Esophagus muscularis mucosa (tissue), 4 donors: ENCODE measurements at regions of chr1 and their contacts with region 1.

Region 1: GRCh38 chr1:171313835-171314320 is at the start of gene FMO4:
- DNase-seq: peak; percentile 97
- H3K4me3 ChIP-seq: peak within 1 kb of the TSS; percentile 24 to 42 (median 38)
- H3K27ac ChIP-seq: peak within 1 kb of the TSS; percentile 69 to 79 (median 74)
- H3K4me1 ChIP-seq: peaks cover 5 to 17% (median 16%) of the 10 kb centered on the region in 4 donors
- H3K27me3 ChIP-seq: no peaks in the 10 kb centered on the region
- CTCF ChIP-seq: peak; percentile 78 to 87 (median 83)
- EP300 ChIP-seq: no peak
- POLR2A ChIP-seq: no peak
- total RNA-seq, gene FMO4: 1.2 to 3.2 (median 1.7) TPM

Region 2: GRCh38 chr1:170967042-170967910 is 346.6 kb before region 1 on chr1:
- intact Hi-C with region 1: loop called (anchors 5 kb)
- DNase-seq: no peak
- H3K4me3 ChIP-seq: no peak overlapping the region
- H3K27ac ChIP-seq: no peak overlapping the region
- H3K4me1 ChIP-seq: no peaks in the 10 kb centered on the region
- H3K27me3 ChIP-seq: no peaks in the 10 kb centered on the region
- CTCF ChIP-seq: peak; percentile 67 to 76 (median 69)
- EP300 ChIP-seq: no peak
- POLR2A ChIP-seq: no peak

Region 3: GRCh38 chr1:171081314-171081753 is 232.5 kb before region 1 on chr1:
- intact Hi-C with region 1: loop called (anchors 10 kb)
- DNase-seq: no peak
- H3K4me3 ChIP-seq: no peak overlapping the region
- H3K27ac ChIP-seq: peak overlapping the region; percentile 40 to 63 (median 46)
- H3K4me1 ChIP-seq: peaks cover 9 to 14% (median 11%) of the 10 kb centered on the region in 4 donors
- H3K27me3 ChIP-seq: no peaks in the 10 kb centered on the region
- CTCF ChIP-seq: peak; percentile 38 to 55 (median 54)
- EP300 ChIP-seq: no peak
- POLR2A ChIP-seq: no peak

Region 4: GRCh38 chr1:171245458-171246064 is 68.3 kb before region 1 on chr1:
- intact Hi-C with region 1: loop called (anchors 2 kb)
- DNase-seq: no peak
- H3K4me3 ChIP-seq: no peak overlapping the region
- H3K27ac ChIP-seq: no peak overlapping the region
- H3K4me1 ChIP-seq: no peaks in the 10 kb centered on the region
- H3K27me3 ChIP-seq: no peaks in the 10 kb centered on the region
- CTCF ChIP-seq: peak; percentile 55 to 69 (median 57)
- EP300 ChIP-seq: no peak
- POLR2A ChIP-seq: no peak